ENCODE measurements at regions of chr22 and their contacts with region 1.

Region 1: GRCh38 chr22:31080848-31081649 is at the start of gene SMTN:
- DNase-seq: peak; percentile 93 to 97 (median 96)
- ATAC-seq: peak; percentile 84
- H3K4me3 ChIP-seq: peak within 1 kb of the TSS; percentile 66 to 77
- H3K27ac ChIP-seq: peak within 1 kb of the TSS; percentile 90 to 95
- H3K4me1 ChIP-seq: peaks cover 18 to 56% of the 10 kb centered on the region in 2 donors
- H3K27me3 ChIP-seq: no peaks in the 10 kb centered on the region
- CTCF ChIP-seq: no peak
- polyA plus RNA-seq, gene SMTN: 71.0 to 98.7 (median 82.1) TPM

Region 2: DNA sequence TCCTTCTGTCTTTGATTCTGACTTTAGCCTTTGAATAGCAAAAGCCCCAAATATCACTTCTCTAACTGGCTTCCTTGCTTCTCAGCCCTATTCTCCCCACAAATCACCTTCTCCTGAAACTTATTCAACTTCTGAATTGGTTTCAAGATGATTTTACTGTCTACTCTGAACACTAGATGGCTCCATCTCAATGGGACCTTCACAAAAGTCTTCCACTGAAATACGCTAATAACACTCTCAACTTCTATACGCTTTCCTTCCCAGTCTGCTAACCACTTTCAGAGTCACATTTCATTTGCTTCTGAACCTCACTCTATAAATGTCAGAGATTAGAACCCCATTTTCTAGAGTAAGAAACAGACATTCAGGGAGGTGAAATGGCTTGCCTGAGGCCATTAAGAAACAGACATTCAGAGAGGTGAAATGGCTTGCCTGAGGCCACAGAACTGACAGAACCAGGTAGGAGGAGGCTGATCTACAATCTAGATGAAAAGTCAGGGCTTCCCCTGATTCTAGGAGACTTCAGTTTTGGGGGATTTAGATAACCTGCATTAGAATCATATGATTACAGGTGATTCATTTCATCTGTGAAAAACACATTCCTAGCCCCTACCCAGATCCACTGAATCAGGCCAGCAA is 133.1 kb before region 1 on chr22:
- intact Hi-C with region 1: loop called (anchors 5 to 10 kb)
- DNase-seq: peak in 2 of 4 donors; percentile 48 to 68
- ATAC-seq: peak; percentile 79
- H3K4me3 ChIP-seq: no peak overlapping the region
- H3K27ac ChIP-seq: no peak overlapping the region
- H3K4me1 ChIP-seq: peaks cover 0 to 9% of the 10 kb centered on the region in 2 donors
- H3K27me3 ChIP-seq: no peaks in the 10 kb centered on the region
- CTCF ChIP-seq: peak in 1 of 2 donors; percentile 39

Region 3: DNA sequence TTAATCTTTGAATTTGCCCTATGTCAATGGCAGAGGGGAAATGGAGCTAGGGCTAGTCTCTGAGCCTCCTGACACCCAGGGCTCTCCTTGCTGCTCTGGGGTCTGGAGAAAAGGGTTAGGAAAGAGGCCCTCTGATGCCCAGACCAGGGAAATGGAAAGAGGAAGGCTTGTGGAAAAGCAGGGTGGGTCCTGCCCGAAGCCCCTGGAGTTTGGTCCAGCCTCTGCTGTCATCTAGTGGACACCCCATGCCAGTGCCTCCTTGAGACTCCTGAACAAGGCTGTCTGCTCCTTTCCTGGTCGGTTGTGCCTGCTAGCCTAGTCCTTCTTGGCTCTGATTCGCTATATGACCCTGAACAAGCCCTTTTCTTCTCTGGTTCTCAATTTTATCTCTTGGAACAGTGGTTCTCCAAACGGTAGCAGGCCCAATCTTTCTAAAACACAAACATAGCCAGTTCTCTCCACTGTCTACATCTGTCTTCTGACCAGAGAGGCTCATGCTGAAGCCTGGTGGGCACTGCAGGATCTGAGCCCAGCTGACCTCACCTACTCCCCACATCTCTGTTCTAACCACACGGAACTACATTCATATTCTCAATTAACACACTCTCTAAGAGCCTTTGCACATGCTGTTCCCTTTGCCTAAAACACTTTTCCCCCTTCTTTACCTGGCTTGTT is 68.0 kb after region 1 on chr22:
- intact Hi-C with region 1: no loop called
- DNase-seq: peak in 3 of 4 donors; percentile 39 to 77 (median 65)
- ATAC-seq: peak; percentile 99
- H3K4me3 ChIP-seq: no peak overlapping the region
- H3K27ac ChIP-seq: no peak overlapping the region
- H3K4me1 ChIP-seq: no peaks in the 10 kb centered on the region
- H3K27me3 ChIP-seq: no peaks in the 10 kb centered on the region
- CTCF ChIP-seq: peak; percentile 78 to 85

Measured in left lung (tissue), 14 donors.